ENCODE measurements at regions of chr20 and their contacts with region 1.

Region 1: DNA sequence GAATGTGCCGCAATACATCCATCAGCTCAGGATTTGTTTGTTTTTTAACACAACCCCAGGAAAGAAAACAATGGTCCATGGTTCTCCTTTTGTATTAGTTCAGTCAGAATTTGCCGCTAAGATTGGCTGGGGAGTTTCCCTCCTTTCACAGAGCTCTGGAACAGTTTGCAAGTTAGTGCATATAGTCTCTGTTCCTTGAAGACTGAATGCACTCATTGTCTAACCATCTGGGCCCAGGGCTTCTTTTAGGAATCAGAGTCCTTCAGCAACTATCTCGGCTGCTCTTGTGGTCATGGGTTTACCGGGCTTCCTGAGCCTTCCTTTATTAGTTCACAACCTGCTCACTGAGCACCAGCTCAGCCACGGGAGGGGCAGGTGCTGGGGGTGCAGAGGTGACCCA is 121.3 kb downstream of the SLC23A2 start:
- DNase-seq: no peak
- H3K27ac ChIP-seq: no peak overlapping the region
- CTCF ChIP-seq: no peak

Region 2: GRCh38 chr20:5448449-5449118 is 568.5 kb after region 1 on chr20:
- CTCF ChIA-PET with region 1: interaction called, 10 read pairs
- POLR2A ChIA-PET with region 1: no interaction called
- DNase-seq: peak; percentile 68
- H3K27ac ChIP-seq: no peak overlapping the region
- CTCF ChIP-seq: peak; percentile 88

Measured in RWPE1 (cell line).